ENCODE measurements at regions of chr18 and their contacts with region 1.

Region 1: DNA sequence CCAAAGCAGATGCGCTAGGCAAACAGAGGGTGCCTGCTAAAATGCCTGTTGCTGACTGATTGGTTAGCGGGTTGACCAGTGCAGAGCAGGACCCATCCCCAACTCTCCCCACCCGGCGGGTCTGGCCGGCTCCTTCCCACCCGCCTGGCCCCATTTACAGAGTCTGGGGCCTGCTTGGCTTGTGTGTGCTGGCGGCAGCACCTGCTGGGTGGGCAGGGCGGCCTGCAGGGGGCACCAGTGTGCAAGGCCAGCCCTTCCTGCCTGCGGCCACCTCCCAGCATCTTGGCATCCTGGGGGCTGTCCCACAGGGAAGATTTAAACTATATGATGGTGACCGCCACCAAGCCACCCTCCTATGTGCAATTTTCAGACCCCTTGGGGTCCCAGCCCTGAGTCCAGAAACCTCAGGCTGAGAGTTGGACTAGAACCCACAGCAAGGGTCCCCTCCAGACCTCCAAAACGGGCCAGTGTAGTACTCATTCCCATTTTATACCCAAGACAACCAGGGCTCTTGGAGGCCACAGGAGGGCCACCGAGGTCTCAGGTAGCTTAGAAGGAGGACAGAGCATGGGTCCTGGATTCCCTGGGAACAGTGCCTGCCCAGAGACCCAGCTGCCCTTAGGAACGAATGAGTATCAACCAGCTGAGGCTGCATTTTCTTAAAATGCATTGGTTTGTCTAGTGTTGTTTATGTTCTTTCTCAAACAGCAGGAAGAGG is 173.6 kb downstream of the SMAD7 start:
- H3K4me3 Mint-ChIP-seq: no peak overlapping the region
- H3K27ac Mint-ChIP-seq: no peak overlapping the region
- H3K4me1 Mint-ChIP-seq: peaks cover 71% of the 10 kb centered on the region
- H3K27me3 Mint-ChIP-seq: peaks cover 3% of the 10 kb centered on the region

Region 2: GRCh38 chr18:48834413-48835031 is 57.3 kb after region 1 on chr18:
- intact Hi-C with region 1: loop called (anchors 5 kb)
- H3K4me3 Mint-ChIP-seq: peak overlapping the region; percentile 46
- H3K27ac Mint-ChIP-seq: peak overlapping the region; percentile 24
- H3K4me1 Mint-ChIP-seq: peaks cover 97% of the 10 kb centered on the region
- H3K27me3 Mint-ChIP-seq: peaks cover 16% of the 10 kb centered on the region

Region 3: DNA sequence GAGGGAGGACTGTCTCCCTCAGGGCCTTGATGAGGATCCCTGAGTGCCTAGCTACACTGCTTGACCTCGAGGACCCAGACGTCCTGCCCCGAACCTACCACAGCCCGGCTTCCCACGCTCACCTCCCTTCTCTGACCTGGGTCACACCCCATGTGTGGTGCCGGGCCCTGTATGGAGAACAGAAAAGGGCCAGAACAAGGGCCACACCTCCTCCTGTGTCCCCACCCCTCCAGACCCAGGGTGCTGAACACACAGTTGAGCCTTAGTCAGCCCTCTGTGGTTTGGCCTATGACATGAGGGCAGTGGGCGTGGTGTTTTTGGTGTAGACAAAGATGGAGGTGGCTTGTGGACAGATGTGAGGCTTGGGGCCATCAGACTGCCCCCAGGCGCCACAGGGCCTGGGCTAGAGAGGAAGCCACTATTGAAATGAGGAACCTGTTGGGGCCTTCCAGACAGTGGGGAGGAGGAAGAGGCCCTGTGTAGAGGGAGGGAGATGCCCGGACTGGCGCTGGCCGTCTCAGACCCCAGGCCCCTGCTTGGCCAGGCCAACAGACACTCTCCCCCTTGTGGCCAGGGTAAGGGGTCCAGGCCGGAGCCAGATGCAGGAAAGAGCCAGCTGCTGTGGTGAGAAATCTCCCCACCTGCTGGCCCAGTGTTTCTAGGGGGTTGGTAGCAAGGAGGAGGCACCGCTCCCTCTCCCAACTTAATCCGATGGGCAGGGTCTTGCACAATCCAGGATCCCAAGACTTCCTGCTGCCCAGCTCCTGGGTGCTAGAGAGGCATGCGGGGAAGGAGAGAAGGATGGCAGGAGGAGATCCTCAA is 119.7 kb after region 1 on chr18:
- intact Hi-C with region 1: loop called (anchors 2 kb)
- H3K4me3 Mint-ChIP-seq: peak overlapping the region; percentile 37
- H3K27ac Mint-ChIP-seq: peak overlapping the region; percentile 81
- H3K4me1 Mint-ChIP-seq: peaks cover 64% of the 10 kb centered on the region
- H3K27me3 Mint-ChIP-seq: no peaks in the 10 kb centered on the region

Region 4: GRCh38 chr18:48928787-48929186 is 151.6 kb after region 1 on chr18:
- intact Hi-C with region 1: loop called (anchors 10 kb)
- H3K4me3 Mint-ChIP-seq: peak overlapping the region; percentile 71
- H3K27ac Mint-ChIP-seq: peak overlapping the region; percentile 77
- H3K4me1 Mint-ChIP-seq: peaks cover 100% of the 10 kb centered on the region
- H3K27me3 Mint-ChIP-seq: no peaks in the 10 kb centered on the region

Region 5: DNA sequence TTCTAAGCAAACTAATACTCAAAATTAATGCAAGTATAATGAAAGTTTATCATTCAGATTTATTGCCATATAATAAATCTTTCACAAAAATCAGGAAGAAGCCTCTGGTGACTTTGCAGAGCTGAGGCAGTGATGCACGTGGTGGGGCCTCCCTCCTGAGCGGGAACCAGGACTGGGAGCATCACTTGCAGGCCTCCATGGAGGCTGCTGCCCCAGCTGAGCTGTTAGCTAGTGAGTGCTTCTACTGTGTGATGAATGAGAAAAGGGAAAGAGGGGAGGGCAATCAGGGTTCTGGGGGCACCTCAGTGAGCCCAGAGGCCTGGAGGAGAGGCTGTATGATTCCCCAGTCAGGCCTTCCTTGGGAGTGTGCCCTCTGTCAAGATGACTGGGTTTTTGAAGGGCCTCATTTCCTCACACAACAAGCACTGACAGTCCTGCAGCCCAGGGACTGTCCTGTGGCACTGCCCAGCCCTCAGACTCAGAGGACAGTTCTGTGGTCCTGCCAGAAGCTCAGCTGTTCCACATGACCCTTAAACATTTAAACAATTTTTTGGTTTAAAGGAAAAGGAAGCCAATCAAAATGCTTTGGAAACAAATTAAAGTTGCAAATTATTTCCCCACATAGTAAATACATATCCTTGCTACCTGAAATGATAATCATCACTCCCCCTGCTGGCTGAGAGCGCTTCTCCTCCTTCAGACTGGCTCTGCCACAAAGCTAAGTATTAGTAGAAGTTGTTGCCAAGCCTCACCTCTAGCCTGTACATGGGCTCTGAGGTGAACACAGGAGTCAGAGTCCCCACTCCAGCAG is 264.5 kb after region 1 on chr18:
- intact Hi-C with region 1: loop called (anchors 10 kb)
- H3K4me3 Mint-ChIP-seq: no peak overlapping the region
- H3K27ac Mint-ChIP-seq: no peak overlapping the region
- H3K4me1 Mint-ChIP-seq: peaks cover 18% of the 10 kb centered on the region
- H3K27me3 Mint-ChIP-seq: no peaks in the 10 kb centered on the region

Region 6: GRCh38 chr18:49178736-49179135 is 401.6 kb after region 1 on chr18:
- intact Hi-C with region 1: loop called (anchors 5 kb)
- H3K4me3 Mint-ChIP-seq: no peak overlapping the region
- H3K27ac Mint-ChIP-seq: no peak overlapping the region
- H3K4me1 Mint-ChIP-seq: peaks cover 21% of the 10 kb centered on the region
- H3K27me3 Mint-ChIP-seq: peaks cover 11% of the 10 kb centered on the region

Region 7: GRCh38 chr18:49250816-49251388 is 473.7 kb after region 1 on chr18:
- intact Hi-C with region 1: loop called (anchors 10 kb)
- H3K4me3 Mint-ChIP-seq: no peak overlapping the region
- H3K27ac Mint-ChIP-seq: peak overlapping the region; percentile 7
- H3K4me1 Mint-ChIP-seq: peaks cover 22% of the 10 kb centered on the region
- H3K27me3 Mint-ChIP-seq: no peaks in the 10 kb centered on the region